ENCODE measurements at regions of chr19 and their contacts with region 1.

Region 1: GRCh38 chr19:38583219-38583984 is 34.4 kb downstream of the MAP4K1 start:
- DNase-seq: no peak
- ATAC-seq: no peak
- H3K4me3 ChIP-seq: no peak overlapping the region
- H3K27ac ChIP-seq: no peak overlapping the region
- H3K4me1 ChIP-seq: no peaks in the 10 kb centered on the region
- H3K27me3 ChIP-seq: no peaks in the 10 kb centered on the region
- CTCF ChIP-seq: no peak
- POLR2A ChIP-seq: no peak

Region 2: DNA sequence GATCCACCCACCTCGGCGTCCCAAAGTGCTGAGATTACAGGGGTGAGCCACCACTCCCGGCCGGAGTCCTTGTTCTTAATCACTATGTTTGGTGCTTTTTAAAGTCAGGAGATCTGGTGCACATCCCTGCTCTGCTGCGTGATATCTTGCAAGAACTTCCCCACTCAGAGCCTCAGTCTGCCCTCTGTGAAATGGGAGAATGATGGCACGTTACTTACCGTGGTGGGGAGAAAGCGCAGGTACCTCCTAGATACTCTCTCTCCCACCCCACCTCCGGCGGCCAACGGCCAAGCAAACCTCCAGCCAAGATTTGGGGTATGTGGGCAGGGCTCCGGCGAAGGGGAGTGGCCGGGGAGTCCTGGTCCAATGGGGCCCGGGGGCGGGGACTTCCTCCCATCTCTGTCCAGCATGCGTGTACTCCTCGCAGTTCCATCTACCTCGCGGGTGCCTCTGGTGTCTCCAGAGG is 150.1 kb before region 1 on chr19 and contains the start of gene RYR1:
- intact Hi-C with region 1: loop called in 1 of 10 experiments (anchors 10 kb)
- DNase-seq: peak; percentile 40 to 87 (median 71)
- ATAC-seq: peak in 3 of 4 donors; percentile 85 to 89 (median 88)
- H3K4me3 ChIP-seq: peak within 1 kb of the TSS in 6 of 12 donors; percentile 4 to 20 (median 12)
- H3K27ac ChIP-seq: no peak within 1 kb of the TSS
- H3K4me1 ChIP-seq: peaks cover 0 to 17% (median 0%) of the 10 kb centered on the region in 12 donors
- H3K27me3 ChIP-seq: peaks cover 8 to 52% (median 25%) of the 10 kb centered on the region in 9 donors
- CTCF ChIP-seq: no peak
- POLR2A ChIP-seq: no peak
- total RNA-seq, gene RYR1: 0.44 to 2.1 (median 1.4) TPM

Measured in heart left ventricle (tissue), 16 donors.